ENCODE measurements at regions of chr7 and their contacts with region 1.

Region 1: DNA sequence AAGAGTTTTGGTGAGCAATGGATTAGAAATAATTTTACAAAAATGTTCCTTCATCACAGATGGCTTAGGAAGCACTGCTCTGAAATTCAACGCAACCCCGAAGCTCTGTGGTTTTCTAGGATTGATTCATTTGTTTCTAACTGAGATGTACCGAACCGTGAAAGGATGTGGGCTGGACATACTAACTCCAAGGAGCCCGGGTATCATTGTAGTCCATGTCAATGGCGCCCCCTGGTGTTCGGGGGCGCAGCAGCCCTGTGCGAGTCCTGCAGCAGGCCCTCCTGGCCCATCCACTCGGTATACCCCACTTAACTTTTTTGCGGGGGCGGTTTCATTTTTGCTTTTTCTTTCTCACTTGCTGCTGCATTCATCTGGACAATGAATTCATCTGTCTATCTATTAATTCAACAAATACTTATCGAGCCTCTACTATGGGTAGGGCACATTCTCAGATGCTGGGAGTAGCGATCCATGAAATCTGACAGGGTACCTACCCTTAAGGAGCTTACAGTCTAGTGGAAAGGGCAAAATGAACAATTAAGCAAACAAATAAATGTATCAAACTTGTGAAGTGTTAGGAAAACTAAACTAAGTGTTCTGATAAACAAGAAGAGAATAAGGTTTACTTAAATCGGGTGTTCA is 25.2 kb upstream of the ITPRID1 start:
- DNase-seq: peak; percentile 72
- ATAC-seq: peak; percentile 68
- H3K4me3 Mint-ChIP-seq: no peak overlapping the region
- H3K27ac Mint-ChIP-seq: no peak overlapping the region
- H3K4me1 Mint-ChIP-seq: no peaks in the 10 kb centered on the region
- H3K27me3 Mint-ChIP-seq: no peaks in the 10 kb centered on the region

Region 2: DNA sequence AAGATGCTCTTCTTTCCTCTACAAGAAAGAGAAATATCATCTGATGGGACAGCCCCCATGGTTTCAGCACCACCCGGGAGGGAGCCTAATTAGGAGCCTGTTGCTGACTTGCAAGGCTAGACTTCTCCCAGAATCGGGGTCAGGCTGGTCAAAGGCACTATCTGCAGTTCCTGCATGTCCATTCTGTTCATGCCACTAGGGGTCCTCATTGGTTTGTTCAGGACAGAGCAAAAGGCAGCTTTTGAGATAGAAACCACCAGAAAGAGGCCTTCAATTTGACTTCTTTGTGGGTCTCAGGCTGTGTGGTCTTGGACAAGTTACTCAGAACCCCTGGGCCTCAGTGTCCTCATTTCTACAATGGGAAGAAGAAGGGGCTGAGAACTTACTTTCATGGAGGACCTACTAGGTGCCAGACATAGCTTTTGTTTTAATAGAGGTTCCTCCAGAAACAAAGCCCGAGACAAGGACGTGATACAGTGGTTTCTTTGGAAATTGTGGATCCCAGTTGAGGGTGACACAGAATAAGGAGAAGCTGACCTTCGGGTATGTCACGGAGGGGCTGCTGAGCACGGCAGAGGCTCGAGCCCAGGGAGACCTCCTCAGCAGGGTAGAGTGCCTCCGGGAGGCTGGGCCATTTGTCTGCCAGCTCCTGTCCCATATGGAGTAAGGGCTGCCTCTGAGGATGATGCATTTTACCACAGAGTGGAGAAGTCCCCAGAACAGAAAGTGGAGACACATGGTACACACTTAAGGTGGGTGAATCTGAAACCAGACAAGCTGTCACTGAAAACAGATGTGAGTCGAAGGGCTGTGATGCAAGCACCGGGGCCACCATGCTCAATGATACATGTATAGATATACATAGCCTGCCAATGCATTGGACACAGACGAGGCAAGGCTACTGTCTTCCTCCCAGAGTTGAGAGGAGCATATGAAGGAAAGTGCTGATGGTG is 115.1 kb before region 1 on chr7:
- CTCF ChIA-PET with region 1: no interaction called
- POLR2A ChIA-PET with region 1: no interaction called
- intact Hi-C with region 1: loop called in 1 of 2 experiments (anchors 5 kb)
- DNase-seq: peak; percentile 24
- ATAC-seq: peak; percentile 42
- H3K4me3 Mint-ChIP-seq: no peak overlapping the region
- H3K27ac Mint-ChIP-seq: no peak overlapping the region
- H3K4me1 Mint-ChIP-seq: no peaks in the 10 kb centered on the region
- H3K27me3 Mint-ChIP-seq: peaks cover 2% of the 10 kb centered on the region